Heart left ventricle (tissue), 16 donors: ENCODE measurements at regions of chr19 and their contacts with region 1.

Region 1: GRCh38 chr19:51367565-51368365 is 1.0 kb downstream of the CLDND2 start:
- DNase-seq: peak; percentile 99 to 100 (median 100)
- ATAC-seq: peak; percentile 90 to 94 (median 94)
- H3K4me3 ChIP-seq: peak overlapping the region; percentile 61 to 94 (median 78)
- H3K27ac ChIP-seq: peak overlapping the region; percentile 61 to 98 (median 96)
- H3K4me1 ChIP-seq: peaks cover 2 to 43% (median 20%) of the 10 kb centered on the region in 12 donors
- H3K27me3 ChIP-seq: no peaks in the 10 kb centered on the region
- CTCF ChIP-seq: peak in 2 of 12 donors; percentile 8 to 9
- POLR2A ChIP-seq: peak in 1 of 2 donors; percentile 67

Region 2: GRCh38 chr19:51327066-51328001 is 40.4 kb before region 1 on chr19:
- intact Hi-C with region 1: no loop called
- DNase-seq: peak in 4 of 5 donors; percentile 30 to 63 (median 50)
- ATAC-seq: peak in 3 of 4 donors; percentile 48 to 77 (median 69)
- H3K4me3 ChIP-seq: peak overlapping the region in 8 of 12 donors; percentile 7 to 44 (median 29)
- H3K27ac ChIP-seq: no peak overlapping the region
- H3K4me1 ChIP-seq: peaks cover 0 to 17% (median 4%) of the 10 kb centered on the region in 12 donors
- H3K27me3 ChIP-seq: peaks cover 24 to 78% (median 46%) of the 10 kb centered on the region in 9 donors
- CTCF ChIP-seq: peak in 3 of 12 donors; percentile 15 to 23 (median 20)
- POLR2A ChIP-seq: no peak

Region 3: GRCh38 chr19:51393959-51394836 is 26.4 kb after region 1 on chr19:
- intact Hi-C with region 1: loop called in 3 of 10 experiments (anchors 1 to 2 kb)
- DNase-seq: peak; percentile 92 to 95 (median 94)
- ATAC-seq: peak; percentile 95 to 99 (median 98)
- H3K4me3 ChIP-seq: peak overlapping the region in 11 of 12 donors; percentile 12 to 59 (median 44)
- H3K27ac ChIP-seq: peak overlapping the region; percentile 11 to 88 (median 66)
- H3K4me1 ChIP-seq: peaks cover 0 to 24% (median 5%) of the 10 kb centered on the region in 12 donors
- H3K27me3 ChIP-seq: no peaks in the 10 kb centered on the region
- CTCF ChIP-seq: peak in 4 of 12 donors; percentile 10 to 27 (median 16)
- POLR2A ChIP-seq: no peak

Region 4: DNA sequence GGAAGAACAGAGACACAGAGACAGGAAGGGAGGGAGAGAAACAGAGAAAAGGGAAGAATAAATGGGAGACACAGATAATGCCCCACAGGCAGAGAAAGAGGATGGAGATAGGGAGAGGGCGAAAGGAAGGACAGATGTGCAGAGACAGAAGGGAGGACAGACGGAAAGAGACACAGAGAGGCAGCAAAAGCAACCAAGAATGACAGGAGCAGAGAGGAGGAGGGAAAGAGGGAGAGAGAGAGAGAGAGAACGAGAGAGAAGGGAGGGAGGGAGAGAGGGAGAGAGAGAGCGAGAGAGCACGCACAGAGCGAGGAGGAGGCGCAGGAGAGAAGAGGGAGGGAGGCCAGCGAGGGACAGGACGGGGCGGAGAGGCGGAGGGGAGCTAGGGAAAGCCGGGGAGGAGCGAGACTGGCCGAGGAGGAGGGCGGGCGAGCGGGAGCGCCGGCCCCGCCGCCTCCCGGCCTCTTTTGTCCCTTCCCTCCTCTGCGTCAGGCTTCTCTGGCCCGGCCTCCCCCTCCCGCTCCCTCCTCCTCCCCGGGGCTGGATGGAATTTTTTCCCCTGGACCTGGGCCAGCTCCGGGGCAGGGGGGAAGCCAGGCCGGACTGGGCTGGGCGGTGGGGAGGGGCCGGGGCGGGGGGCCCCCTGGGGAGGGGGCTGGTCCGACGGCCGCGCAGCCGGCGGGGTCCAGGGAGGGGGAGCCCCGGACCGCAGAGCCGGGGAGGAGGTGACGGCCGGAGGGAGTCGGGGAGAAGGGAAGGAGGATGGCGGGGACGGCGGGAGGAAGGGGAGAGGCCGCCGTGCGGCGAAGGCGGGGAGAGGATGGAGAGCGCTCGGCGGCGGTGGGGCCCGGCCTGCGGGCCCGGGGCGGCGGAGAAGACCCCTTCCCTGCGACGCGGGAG is 321.2 kb after region 1 on chr19:
- intact Hi-C with region 1: loop called in 2 of 10 experiments (anchors 5 kb)
- DNase-seq: peak; percentile 94 to 96 (median 95)
- ATAC-seq: peak; percentile 89 to 93 (median 90)
- H3K4me3 ChIP-seq: peak overlapping the region; percentile 63 to 99 (median 94)
- H3K27ac ChIP-seq: peak overlapping the region; percentile 90 to 100 (median 98)
- H3K4me1 ChIP-seq: peaks cover 0 to 48% (median 33%) of the 10 kb centered on the region in 12 donors
- H3K27me3 ChIP-seq: no peaks in the 10 kb centered on the region
- CTCF ChIP-seq: peak in 4 of 12 donors; percentile 4 to 28 (median 22)
- POLR2A ChIP-seq: peak in 1 of 2 donors; percentile 69

Region 5: DNA sequence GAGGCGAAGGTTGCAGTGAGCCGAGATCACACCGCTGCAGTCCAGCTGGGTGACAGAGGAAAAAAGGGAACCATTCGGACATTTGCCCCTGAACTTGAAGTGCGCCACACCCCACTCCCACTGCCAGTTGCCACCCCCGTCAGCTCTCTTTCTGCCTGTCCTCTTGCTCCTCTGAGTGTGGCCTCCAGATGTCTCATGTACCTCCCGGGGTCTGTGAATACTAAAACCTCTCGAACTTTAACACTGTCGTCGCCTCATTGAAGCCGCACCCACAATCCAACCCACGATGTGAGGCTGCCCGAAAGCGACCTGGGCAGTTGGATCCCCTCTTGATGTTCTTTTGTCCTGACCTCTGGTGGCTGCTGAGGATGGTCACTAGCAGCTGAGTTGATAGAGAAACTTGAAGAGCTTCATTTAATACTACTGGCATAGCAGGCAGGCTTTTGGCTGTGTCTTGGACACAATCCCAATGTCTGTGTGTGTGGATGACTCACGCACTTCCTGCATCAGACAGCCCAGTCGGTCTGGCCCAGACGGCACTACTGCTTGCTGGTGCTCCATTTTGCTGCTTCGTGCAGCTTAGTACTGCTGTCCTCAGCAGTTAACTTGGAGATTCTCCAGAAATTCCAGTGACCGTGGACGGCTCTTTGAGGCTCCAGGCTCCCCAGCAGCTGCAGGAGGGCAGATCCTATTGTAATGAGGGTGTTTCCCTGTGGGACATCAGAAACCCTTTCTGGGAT is 431.4 kb after region 1 on chr19:
- intact Hi-C with region 1: loop called in 1 of 10 experiments (anchors 10 kb)
- DNase-seq: peak; percentile 88 to 97 (median 90)
- ATAC-seq: peak; percentile 92 to 96 (median 95)
- H3K4me3 ChIP-seq: peak overlapping the region in 5 of 12 donors; percentile 7 to 53 (median 17)
- H3K27ac ChIP-seq: peak overlapping the region; percentile 79 to 99 (median 94)
- H3K4me1 ChIP-seq: peaks cover 0 to 66% (median 34%) of the 10 kb centered on the region in 12 donors
- H3K27me3 ChIP-seq: no peaks in the 10 kb centered on the region
- CTCF ChIP-seq: peak in 7 of 12 donors; percentile 12 to 43 (median 19)
- POLR2A ChIP-seq: no peak